Activated T-helper 1 cell treated with anti-CD3 and anti-CD28 coated beads, Interleukin-12 subunit alpha, Interleukin-12 subunit beta, Interleukin-2, Interleukin-4 antibody, amounts not matched to agents 30 ng/mL and 10 ng/mL and 1 ng/mL, durations not matched to agents 14 hours and 24 hours and 36 hours (primary cell): ENCODE measurements at regions of chr12 and their contacts with region 1.

Region 1: DNA sequence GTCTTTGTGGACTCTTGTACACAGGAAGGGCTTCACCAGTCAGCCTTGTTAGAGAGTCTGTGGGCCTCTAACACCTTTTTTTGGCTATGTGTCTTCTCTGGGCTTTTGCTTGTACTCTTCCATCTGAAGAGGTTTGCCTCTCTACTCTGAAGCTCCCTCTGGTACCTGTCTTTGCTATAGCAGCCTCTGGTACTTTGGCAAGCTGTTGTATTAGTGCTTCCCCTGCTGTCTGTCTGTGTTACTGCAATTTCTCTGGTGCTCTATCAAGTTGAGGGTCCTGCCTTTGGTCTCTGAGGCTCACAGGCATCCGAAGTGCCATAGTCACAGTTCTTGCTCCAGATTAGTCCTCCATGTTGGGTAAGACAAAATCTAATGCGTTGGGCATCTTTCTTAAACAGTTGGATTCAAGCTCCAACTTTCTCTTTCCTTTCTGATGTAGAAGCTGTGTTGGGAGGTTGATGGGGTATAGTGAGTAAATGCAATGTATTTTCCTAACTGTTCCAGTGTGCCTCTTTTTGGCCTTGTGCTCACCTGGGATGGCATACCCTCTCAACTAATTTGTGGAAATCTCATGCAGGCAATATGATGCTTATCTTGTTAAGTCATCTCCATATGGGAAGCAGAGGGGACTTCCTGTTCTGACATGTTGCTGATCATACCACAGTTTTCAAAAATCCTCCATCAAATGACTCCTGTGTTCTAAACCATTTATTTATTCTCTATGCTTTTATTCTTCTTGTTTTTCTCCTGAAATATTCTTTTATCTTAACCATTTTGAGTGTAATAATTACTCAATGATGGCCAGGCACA is 88.8 kb downstream of the ATF7IP start:
- DNase-seq: peak; percentile 34
- H3K4me3 Mint-ChIP-seq: peak overlapping the region; percentile 46
- H3K27ac Mint-ChIP-seq: peak overlapping the region; percentile 84
- H3K4me1 Mint-ChIP-seq: peaks cover 54% of the 10 kb centered on the region
- H3K27me3 Mint-ChIP-seq: no peaks in the 10 kb centered on the region

Region 2: GRCh38 chr12:14185427-14186192 is 268.7 kb before region 1 on chr12:
- intact Hi-C with region 1: loop called (anchors 1 kb)
- DNase-seq: peak; percentile 3
- H3K4me3 Mint-ChIP-seq: no peak overlapping the region
- H3K27ac Mint-ChIP-seq: no peak overlapping the region
- H3K4me1 Mint-ChIP-seq: no peaks in the 10 kb centered on the region
- H3K27me3 Mint-ChIP-seq: peaks cover 4% of the 10 kb centered on the region

Region 3: DNA sequence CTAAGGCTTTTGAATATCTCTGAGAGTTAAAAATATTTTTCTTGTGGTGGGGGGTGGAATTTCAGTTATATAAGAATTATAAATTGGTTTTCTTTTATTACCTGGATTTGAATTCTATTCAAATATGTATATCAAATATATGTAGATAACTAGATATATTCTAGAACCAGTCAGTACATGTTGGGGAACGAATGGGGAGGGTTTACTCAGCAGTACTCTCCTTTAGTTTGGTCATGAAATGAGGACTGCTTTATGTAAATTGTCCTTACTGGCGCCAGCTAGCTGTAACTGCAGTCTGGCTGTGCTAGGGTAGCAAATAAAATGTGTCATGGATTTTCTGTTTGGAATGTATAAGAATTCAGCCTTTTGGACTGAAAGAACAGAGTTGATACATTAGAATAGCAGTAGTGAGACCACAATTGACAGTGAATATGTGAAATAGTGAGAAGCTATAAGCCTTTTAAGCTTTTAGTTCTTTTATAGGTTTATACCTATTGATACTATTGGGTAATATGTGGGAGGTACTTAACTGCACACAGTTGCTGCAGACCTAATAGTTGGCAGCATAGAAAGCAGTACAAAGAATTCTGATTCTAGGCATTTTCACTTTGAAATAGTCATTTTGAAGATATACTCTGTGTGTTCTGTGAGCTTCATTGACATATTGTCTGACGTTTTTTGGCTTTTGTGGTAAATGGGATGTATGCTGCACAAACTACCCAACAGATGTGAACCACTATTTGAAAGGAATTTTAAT is 59.8 kb before region 1 on chr12:
- intact Hi-C with region 1: loop called (anchors 2 kb)
- DNase-seq: peak; percentile 38
- H3K4me3 Mint-ChIP-seq: peak overlapping the region; percentile 64
- H3K27ac Mint-ChIP-seq: peak overlapping the region; percentile 89
- H3K4me1 Mint-ChIP-seq: peaks cover 87% of the 10 kb centered on the region
- H3K27me3 Mint-ChIP-seq: no peaks in the 10 kb centered on the region

Region 4: GRCh38 chr12:14417715-14418114 is 36.6 kb before region 1 on chr12:
- intact Hi-C with region 1: loop called (anchors 5 kb)
- DNase-seq: peak; percentile 60
- H3K4me3 Mint-ChIP-seq: peak overlapping the region; percentile 75
- H3K27ac Mint-ChIP-seq: peak overlapping the region; percentile 88
- H3K4me1 Mint-ChIP-seq: peaks cover 56% of the 10 kb centered on the region
- H3K27me3 Mint-ChIP-seq: no peaks in the 10 kb centered on the region

Region 5: DNA sequence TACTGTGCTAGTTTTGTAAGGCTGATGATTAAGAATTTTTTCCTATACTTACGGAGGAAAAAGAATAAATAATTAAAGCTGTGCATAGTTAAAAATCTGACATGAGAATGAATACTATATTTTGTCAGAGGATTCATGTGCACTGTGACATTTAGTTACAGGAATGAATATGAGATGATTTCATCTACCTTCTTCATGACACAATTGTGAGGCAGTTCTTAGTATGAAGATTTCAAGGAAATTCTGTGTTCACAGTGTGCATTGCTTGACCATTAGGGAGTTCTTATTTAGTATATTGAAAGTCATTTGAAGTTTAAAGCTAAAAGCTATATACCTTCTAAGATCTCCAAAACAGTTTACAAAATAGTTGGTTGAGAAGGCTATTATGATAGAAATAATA is 18.7 kb before region 1 on chr12:
- intact Hi-C with region 1: loop called (anchors 2 kb)
- DNase-seq: no peak
- H3K4me3 Mint-ChIP-seq: no peak overlapping the region
- H3K27ac Mint-ChIP-seq: peak overlapping the region; percentile 29
- H3K4me1 Mint-ChIP-seq: peaks cover 9% of the 10 kb centered on the region
- H3K27me3 Mint-ChIP-seq: peaks cover 2% of the 10 kb centered on the region

Region 6: DNA sequence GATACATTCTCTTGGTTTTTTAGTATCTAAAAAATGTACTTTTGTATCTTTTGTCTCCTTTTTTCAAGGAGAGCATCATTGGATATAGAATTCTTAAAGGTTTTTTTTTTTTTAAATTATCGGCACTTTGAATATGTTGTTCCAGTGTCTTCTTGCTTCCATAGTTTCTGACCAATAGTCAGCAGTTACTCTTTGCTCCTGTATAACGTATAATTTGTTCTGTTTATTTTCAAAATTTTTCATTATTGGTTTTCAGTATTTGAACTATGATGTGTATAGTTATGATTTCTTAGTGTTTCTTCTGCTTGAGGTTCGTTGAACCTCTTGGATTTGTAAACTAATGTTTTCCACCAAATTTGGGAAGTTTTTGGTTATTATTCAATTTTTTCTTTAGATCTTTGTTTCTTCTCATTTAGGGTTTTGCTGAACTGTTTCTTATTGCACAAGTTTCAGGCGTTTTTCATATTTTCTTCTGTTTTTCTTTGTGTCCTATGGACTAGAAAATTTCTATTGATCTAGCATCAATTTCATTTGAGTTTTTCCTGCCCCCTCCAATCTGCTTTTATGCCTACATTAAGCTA is 19.5 kb after region 1 on chr12:
- intact Hi-C with region 1: no loop called
- DNase-seq: no peak
- H3K4me3 Mint-ChIP-seq: no peak overlapping the region
- H3K27ac Mint-ChIP-seq: no peak overlapping the region
- H3K4me1 Mint-ChIP-seq: no peaks in the 10 kb centered on the region
- H3K27me3 Mint-ChIP-seq: no peaks in the 10 kb centered on the region